ENCODE measurements at regions of chr10 and their contacts with region 1.

Region 1: DNA sequence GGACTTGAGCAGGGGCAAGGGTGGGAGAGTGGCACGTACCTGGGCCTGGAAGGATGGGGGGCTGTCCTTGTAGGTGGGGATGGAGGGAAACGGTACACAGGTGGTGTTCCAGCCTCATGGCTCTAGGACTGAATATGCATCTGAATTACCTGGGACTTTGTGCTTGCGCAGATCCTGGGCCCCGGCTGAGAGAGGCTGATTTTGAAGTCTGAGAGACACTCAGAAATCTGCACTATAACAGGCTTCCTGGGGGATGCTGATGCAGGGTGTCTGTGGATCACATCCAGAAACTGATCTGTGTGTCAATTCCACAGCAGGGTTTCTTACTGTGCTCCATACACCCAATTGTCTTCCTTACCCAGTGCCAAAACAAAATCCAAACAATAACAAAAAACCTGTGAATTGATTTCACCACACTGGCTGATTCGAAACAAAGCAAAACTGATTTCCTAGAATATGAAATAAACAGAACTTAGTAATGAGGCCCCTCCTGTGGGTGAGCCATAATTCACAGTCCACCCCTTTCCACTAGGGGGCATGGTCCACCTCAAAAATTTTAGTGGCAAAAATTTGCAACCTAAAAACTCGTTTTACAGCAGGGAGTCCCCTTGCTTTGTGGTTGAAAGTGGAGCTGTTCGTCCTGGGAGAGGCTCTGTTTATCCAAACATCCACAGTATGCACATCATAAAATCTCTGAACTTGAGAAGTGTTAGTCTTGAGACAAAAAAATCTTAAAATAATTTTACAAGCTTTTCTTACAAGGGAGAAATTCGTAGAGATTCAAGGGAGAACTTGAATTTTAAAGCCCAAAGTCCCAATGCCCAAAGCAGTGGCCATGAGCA is 32.0 kb upstream of the PLEKHA1 start:
- DNase-seq: peak; percentile 58
- CTCF ChIP-seq: peak; percentile 60

Region 2: DNA sequence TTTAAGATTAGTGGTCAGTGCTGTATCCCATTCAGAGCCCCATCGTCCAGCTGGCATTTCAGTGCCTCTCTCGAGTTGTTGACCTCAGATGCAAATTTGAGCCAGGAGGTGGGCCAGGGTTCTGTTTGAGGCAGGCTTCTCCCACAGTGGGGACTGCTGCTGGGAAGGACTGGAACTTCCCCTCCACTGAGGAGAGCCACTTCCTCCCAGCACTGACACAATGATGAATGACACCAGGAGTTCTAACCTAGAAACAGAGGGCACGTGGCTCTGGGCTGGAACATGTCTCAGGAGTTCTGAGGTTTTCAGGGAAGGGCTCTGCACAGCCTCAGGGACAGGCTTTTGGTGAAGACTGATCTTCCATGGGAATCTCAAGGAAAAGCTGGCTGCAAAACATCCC is 89.7 kb before region 1 on chr10:
- in situ Hi-C with region 1: no loop called
- DNase-seq: no peak
- CTCF ChIP-seq: no peak

Region 3: DNA sequence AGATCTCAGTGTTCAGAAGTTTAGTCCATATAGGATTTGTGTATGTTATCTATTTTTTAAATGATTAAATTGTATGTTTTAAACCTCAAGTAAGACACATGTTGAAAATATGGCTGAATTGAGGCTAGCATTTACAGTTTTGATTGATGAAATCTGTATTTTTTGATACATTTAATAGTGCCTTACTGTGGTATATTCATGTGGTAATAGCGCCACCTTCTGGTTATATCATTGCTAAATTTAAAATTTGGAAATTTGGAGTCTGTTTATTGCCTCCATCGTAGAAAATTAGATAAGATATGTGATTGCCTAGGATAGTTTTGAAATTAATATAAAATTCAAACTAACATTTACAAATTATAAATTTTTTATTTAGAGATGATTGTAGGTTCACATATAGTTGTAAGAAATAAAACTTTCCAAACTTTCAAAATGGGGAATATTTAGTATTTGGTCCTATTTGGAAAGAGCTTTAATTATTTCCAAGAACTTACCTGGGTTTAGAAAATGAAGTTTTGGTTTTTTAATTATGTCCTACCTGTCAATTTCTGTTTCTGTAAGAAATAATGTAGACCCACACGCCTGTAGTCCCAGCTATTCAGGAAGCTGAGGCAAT is 92.8 kb after region 1 on chr10:
- in situ Hi-C with region 1: loop called (anchors 25 kb)
- DNase-seq: no peak
- CTCF ChIP-seq: peak; percentile 49

Measured in GM13977 (cell line).